Adrenal gland (tissue), 19 donors: ENCODE measurements at regions of chr13 and their contacts with region 1.

Region 1: DNA sequence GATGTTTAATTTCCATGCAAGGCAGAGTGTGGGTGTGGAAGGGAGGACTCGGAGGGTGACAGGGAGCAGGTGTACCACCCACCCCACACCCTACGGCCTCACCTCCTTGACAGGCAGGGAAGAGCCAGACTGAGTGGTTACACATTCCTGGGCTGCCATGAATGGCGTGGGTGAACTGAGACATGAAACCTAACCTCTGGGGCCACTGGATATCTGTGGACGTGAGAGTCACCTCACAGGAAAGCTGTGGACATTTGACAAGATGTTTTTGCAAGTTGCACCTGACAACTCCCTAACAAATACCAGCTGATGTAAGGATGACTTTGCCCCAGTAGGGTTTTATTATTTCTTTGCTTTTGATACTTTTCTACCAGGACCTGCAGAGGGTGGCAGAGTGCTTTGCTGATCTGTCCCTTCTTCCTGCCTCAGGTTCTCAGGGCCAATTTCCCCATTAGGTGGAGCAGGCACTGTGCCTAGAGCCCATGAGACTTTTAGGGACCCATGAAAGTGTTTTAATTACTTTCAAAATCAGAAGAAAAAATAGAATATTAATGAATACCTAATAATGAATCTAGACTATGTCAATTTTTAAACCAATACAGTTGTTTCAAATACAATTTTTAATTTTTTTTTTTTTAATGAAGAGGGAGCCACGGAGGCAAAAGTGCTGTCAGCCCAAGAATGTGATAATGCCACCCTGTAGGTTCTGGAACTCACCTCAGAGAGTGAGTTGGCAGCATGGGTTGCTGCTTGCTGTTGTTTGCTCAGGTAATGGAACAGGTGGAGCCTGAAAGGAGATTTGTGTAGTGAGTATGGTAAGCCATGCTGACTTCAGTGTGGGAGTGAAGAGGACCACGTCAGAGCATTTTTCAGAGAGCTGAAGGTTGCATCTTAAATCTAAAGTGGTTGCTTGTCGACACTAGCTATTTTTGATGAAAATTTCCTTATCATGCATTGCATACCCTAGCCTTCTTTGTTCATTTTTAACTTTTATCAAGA is 58.0 kb upstream of the CYSLTR2 start:
- DNase-seq: peak; percentile 74 to 88 (median 81)
- H3K4me3 ChIP-seq: no peak overlapping the region
- H3K27ac ChIP-seq: no peak overlapping the region
- H3K4me1 ChIP-seq: peaks cover 2 to 3% of the 10 kb centered on the region in 2 donors
- H3K27me3 ChIP-seq: no peaks in the 10 kb centered on the region
- CTCF ChIP-seq: peak; percentile 51 to 99 (median 89)
- POLR2A ChIP-seq: no peak

Region 2: GRCh38 chr13:48477191-48477855 is 118.4 kb before region 1 on chr13:
- intact Hi-C with region 1: no loop called
- DNase-seq: no peak
- H3K4me3 ChIP-seq: no peak overlapping the region
- H3K27ac ChIP-seq: peak overlapping the region in 3 of 5 donors; percentile 14 to 30 (median 18)
- H3K4me1 ChIP-seq: peaks cover 11 to 17% of the 10 kb centered on the region in 2 donors
- H3K27me3 ChIP-seq: no peaks in the 10 kb centered on the region
- CTCF ChIP-seq: no peak
- POLR2A ChIP-seq: no peak

Region 3: GRCh38 chr13:48653472-48653939 is 57.8 kb after region 1 on chr13 and contains the start of gene CYSLTR2:
- intact Hi-C with region 1: no loop called
- DNase-seq: no peak
- H3K4me3 ChIP-seq: peak within 1 kb of the TSS in 1 of 4 donors; percentile 11
- H3K27ac ChIP-seq: peak within 1 kb of the TSS in 3 of 5 donors; percentile 6 to 54 (median 43)
- H3K4me1 ChIP-seq: peaks cover 14 to 33% of the 10 kb centered on the region in 2 donors
- H3K27me3 ChIP-seq: no peaks in the 10 kb centered on the region
- CTCF ChIP-seq: no peak
- POLR2A ChIP-seq: no peak
- total RNA-seq, gene CYSLTR2: 0.50 to 41.6 (median 19.1) TPM

Region 4: DNA sequence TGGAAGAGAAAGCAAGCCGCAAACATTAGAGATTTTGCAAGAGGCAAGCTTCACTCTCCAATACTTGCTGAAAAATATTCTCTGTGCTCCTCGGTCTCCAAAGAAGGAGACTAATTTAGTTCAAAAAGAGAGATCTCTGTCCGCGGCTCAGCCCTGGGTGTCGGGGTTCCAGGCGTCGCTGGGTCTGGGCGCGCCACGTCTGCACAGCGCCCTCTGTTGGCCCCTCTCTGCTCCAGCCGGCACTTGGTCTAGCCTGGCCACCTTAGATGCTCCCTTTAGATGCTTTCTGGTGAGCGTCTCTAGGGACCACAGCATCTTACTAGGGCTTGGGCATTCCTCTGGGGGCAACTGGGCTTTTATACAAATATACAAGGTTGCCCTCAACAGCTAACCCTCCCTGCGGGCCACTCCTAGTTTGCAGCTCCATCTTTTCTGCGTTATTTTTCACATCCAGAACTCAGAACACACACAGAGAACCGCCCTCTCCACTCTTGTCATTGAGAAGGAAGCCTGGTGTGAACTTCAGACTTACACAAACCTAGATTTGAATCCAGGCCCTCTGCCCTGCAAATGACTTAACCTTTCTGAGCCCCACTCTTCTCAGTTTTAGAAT is 136.3 kb after region 1 on chr13:
- intact Hi-C with region 1: loop called (anchors 10 kb)
- DNase-seq: peak; percentile 45 to 70 (median 61)
- H3K4me3 ChIP-seq: peak overlapping the region in 1 of 4 donors; percentile 25
- H3K27ac ChIP-seq: peak overlapping the region in 1 of 5 donors; percentile 5
- H3K4me1 ChIP-seq: peaks cover 2 to 4% of the 10 kb centered on the region in 2 donors
- H3K27me3 ChIP-seq: no peaks in the 10 kb centered on the region
- CTCF ChIP-seq: peak; percentile 56 to 77 (median 67)
- POLR2A ChIP-seq: no peak

Region 5: DNA sequence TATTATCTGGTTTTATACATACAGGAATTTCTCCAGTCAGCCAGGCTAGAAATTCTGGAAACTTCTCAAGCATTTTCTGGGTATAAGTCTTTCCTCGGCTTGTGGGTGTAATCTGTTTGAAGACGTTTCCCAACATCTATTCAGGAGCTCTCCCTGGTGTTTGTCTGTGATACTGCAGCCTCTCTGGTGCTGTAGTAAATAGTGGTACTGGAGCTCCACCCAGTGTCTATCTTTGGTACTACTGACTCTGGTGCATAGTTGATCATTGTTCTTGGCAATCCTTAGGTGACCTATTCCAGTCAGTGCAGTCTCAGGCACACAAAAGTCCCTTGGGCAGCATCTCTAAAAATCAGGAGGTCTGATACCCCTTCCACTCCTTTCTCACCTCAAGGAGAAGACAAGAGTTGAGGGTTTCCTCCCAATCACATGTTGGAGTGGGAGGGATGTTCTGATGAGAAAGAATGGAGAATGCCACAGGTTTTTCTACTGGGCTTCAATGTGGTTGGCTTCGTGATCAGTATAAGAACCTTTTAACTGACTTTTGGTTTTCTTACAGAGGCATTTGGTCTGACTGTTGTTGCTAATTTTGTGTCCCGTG is 173.5 kb after region 1 on chr13:
- intact Hi-C with region 1: loop called (anchors 2 to 5 kb)
- DNase-seq: peak; percentile 84 to 97 (median 90)
- H3K4me3 ChIP-seq: no peak overlapping the region
- H3K27ac ChIP-seq: no peak overlapping the region
- H3K4me1 ChIP-seq: no peaks in the 10 kb centered on the region
- H3K27me3 ChIP-seq: no peaks in the 10 kb centered on the region
- CTCF ChIP-seq: peak; percentile 99 to 100 (median 100)
- POLR2A ChIP-seq: peak in 1 of 2 donors; percentile 55